ENCODE measurements at regions of chr7 and their contacts with region 1.

Region 1: GRCh38 chr7:88546808-88547207 is 212.7 kb upstream of the ZNF804B start:
- DNase-seq: peak in 1 of 9 donors; percentile 3
- ATAC-seq: no peak
- H3K4me3 ChIP-seq: no peak overlapping the region
- H3K4me3 Mint-ChIP-seq: no peak overlapping the region
- H3K27ac ChIP-seq: no peak overlapping the region
- H3K27ac Mint-ChIP-seq: no peak overlapping the region
- H3K4me1 ChIP-seq: no peaks in the 10 kb centered on the region
- H3K4me1 Mint-ChIP-seq: no peaks in the 10 kb centered on the region
- H3K27me3 ChIP-seq: no peaks in the 10 kb centered on the region
- H3K27me3 Mint-ChIP-seq: peaks cover 0 to 5% (median 0%) of the 10 kb centered on the region in 5 donors

Region 2: GRCh38 chr7:88200789-88201188 is 346.0 kb before region 1 on chr7:
- CTCF ChIA-PET with region 1: no interaction called
- POLR2A ChIA-PET with region 1: no interaction called
- intact Hi-C with region 1: no loop called
- DNase-seq: no peak
- ATAC-seq: no peak
- H3K4me3 ChIP-seq: no peak overlapping the region
- H3K4me3 Mint-ChIP-seq: no peak overlapping the region
- H3K27ac ChIP-seq: no peak overlapping the region
- H3K27ac Mint-ChIP-seq: peak overlapping the region in 1 of 9 donors; percentile 59
- H3K4me1 ChIP-seq: no peaks in the 10 kb centered on the region
- H3K4me1 Mint-ChIP-seq: peaks cover 0 to 4% (median 0%) of the 10 kb centered on the region in 7 donors
- H3K27me3 ChIP-seq: no peaks in the 10 kb centered on the region
- H3K27me3 Mint-ChIP-seq: no peaks in the 10 kb centered on the region

Region 3: DNA sequence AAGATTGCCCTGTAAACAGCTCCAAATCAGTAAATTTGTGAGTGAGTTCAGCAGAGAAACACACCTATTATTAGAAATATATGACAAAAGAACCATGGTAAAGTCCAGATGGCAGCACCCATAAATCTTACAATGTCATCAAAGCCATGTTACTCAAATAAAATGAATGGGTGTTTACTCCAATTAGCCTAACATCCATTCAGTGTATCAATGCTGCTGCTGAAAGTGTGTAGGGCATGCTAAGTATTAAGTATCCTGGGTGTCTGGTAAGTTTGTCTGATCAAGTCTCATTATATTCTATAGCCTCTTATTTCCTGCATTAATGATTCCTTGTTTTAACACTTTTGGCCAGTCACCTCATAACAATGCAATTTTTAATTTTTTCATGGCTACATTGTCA is 54.7 kb before region 1 on chr7:
- CTCF ChIA-PET with region 1: no interaction called
- POLR2A ChIA-PET with region 1: no interaction called
- intact Hi-C with region 1: no loop called
- DNase-seq: no peak
- ATAC-seq: no peak
- H3K4me3 ChIP-seq: no peak overlapping the region
- H3K4me3 Mint-ChIP-seq: no peak overlapping the region
- H3K27ac ChIP-seq: no peak overlapping the region
- H3K27ac Mint-ChIP-seq: no peak overlapping the region
- H3K4me1 ChIP-seq: no peaks in the 10 kb centered on the region
- H3K4me1 Mint-ChIP-seq: no peaks in the 10 kb centered on the region
- H3K27me3 ChIP-seq: no peaks in the 10 kb centered on the region
- H3K27me3 Mint-ChIP-seq: peaks cover 0 to 10% (median 2%) of the 10 kb centered on the region in 5 donors

Region 4: GRCh38 chr7:88735920-88736319 is 189.1 kb after region 1 on chr7:
- CTCF ChIA-PET with region 1: no interaction called
- POLR2A ChIA-PET with region 1: no interaction called
- intact Hi-C with region 1: no loop called
- DNase-seq: no peak
- ATAC-seq: no peak
- H3K4me3 ChIP-seq: no peak overlapping the region
- H3K4me3 Mint-ChIP-seq: no peak overlapping the region
- H3K27ac ChIP-seq: no peak overlapping the region
- H3K27ac Mint-ChIP-seq: no peak overlapping the region
- H3K4me1 ChIP-seq: no peaks in the 10 kb centered on the region
- H3K4me1 Mint-ChIP-seq: no peaks in the 10 kb centered on the region
- H3K27me3 ChIP-seq: peaks cover 0 to 3% of the 10 kb centered on the region in 2 donors
- H3K27me3 Mint-ChIP-seq: peaks cover 0 to 4% (median 0%) of the 10 kb centered on the region in 5 donors

Region 5: DNA sequence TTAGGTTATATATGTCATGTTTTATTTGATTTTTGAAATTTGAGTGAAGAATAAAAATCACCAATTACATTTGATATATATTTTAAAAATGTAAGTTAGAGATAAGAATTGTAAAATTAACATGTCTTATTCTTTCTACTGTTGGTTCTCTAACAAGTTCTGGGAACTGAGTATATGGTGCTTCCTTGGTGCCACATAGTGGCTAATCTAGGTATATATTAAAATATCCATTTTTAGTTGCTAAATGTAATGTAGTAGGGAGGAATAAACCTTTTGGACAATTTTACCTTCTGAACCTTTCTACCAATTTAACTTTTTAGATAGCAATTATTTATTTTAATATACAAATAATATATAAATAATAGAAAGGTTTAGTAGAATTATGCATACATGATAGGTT is 1715.6 kb after region 1 on chr7:
- CTCF ChIA-PET with region 1: no interaction called
- POLR2A ChIA-PET with region 1: no interaction called
- intact Hi-C with region 1: loop called in 1 of 2 experiments (anchors 5 kb)
- DNase-seq: peak in 1 of 9 donors; percentile 4
- ATAC-seq: no peak
- H3K4me3 ChIP-seq: no peak overlapping the region
- H3K4me3 Mint-ChIP-seq: no peak overlapping the region
- H3K27ac ChIP-seq: no peak overlapping the region
- H3K27ac Mint-ChIP-seq: no peak overlapping the region
- H3K4me1 ChIP-seq: no peaks in the 10 kb centered on the region
- H3K4me1 Mint-ChIP-seq: no peaks in the 10 kb centered on the region
- H3K27me3 ChIP-seq: no peaks in the 10 kb centered on the region
- H3K27me3 Mint-ChIP-seq: peaks cover 6 to 27% (median 13%) of the 10 kb centered on the region in 5 donors

Measured in naive thymus-derived CD4-positive, alpha-beta T cell (primary cell).